ENCODE measurements at regions of chr14 and their contacts with region 1.

Region 1: DNA sequence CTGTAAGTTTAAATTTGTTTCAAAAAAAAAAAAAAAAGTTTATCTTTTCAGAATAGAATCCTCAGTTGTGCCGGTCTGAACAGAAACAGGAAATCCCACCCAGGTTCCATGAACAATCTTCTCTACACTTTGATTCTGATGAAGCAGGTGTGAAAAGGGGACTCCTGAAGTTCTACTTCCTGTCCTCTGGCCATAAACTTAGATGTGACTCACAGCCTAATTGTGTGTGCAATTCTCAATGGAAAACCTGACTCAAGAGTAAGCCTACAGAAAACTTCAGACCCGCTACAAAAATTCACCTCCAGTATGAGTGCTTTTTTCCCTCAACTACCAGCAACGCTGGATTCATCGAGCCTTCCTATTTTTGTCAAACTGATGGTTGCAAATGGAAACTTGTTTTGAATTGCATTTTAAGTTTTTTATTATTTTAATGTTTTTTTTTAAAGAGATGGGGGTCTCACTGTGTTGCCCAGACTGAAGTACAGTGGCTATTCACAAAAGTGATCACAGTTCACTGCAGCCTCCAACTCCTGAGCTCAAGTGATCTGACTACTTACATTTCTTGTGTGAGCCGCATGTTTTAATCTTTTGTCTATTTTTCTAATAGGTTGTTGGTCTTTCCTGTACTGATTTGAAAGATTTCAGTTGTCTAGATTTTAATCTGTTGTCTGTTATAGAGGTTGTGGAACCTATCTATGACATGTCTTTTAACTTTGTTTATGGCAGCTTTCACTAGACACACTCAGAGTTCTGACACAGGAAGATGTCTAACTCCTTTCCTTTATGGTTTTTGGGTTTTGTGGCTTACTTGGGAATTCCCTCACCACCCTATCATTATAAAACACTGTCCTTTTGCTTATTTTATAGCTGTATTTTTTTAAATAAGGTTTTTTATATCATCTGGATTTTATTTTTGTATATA is 37.6 kb downstream of the ATG14 start:
- DNase-seq: peak; percentile 68 to 85 (median 70)
- H3K4me3 ChIP-seq: peak overlapping the region in 1 of 2 donors; percentile 18
- H3K4me3 Mint-ChIP-seq: peak overlapping the region; percentile 52 to 87 (median 58)
- H3K27ac ChIP-seq: peak overlapping the region; percentile 33
- H3K27ac Mint-ChIP-seq: peak overlapping the region; percentile 81 to 98 (median 89)
- H3K4me1 ChIP-seq: peaks cover 33% of the 10 kb centered on the region
- H3K4me1 Mint-ChIP-seq: peaks cover 32 to 49% (median 38%) of the 10 kb centered on the region in 4 donors
- H3K27me3 ChIP-seq: no peaks in the 10 kb centered on the region
- H3K27me3 Mint-ChIP-seq: no peaks in the 10 kb centered on the region

Region 2: DNA sequence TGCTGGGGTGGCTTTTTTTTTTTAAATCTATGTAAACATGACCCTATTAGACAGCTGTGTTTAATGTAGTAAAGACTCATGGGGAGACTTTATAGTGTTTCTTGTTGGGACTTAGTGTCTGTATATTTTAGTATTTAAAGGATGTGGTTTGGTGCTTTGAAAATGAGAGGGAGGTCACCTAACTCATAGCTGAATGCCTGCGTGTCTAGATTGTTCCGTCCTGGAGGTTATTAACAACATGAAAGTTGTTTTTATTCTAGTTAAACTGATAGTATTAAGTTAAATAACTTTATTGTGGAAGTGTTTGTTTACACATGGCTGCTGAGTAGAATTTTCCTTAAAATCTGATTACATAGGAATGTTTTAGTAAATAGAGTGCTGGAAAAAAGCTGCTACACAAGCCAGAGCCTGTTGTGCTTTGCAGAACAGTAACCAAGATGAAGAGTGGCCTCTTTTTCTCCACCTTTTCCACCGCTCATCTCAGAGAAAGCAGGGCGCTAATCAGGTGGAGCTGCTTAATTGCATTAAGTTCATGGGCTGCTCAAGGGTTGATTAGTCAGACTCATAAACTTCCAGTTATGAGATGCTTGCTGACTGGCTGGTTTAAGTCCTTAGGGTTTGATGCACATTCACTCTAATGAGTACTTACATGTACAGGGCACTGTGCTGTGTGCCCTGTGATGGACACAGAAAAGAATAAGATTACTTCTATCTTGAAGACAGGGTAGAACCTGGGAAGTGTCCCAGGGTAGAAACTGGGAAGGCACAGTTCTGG is 40.1 kb before region 1 on chr14:
- CTCF ChIA-PET with region 1: interaction called, 5 read pairs
- POLR2A ChIA-PET with region 1: interaction called, 12 read pairs
- intact Hi-C with region 1: loop called (anchors 5 kb)
- DNase-seq: peak in 4 of 5 donors; percentile 37 to 56 (median 40)
- H3K4me3 ChIP-seq: peak overlapping the region; percentile 11 to 37
- H3K4me3 Mint-ChIP-seq: peak overlapping the region; percentile 81 to 93 (median 89)
- H3K27ac ChIP-seq: peak overlapping the region; percentile 67
- H3K27ac Mint-ChIP-seq: peak overlapping the region; percentile 86 to 97 (median 94)
- H3K4me1 ChIP-seq: peaks cover 84% of the 10 kb centered on the region
- H3K4me1 Mint-ChIP-seq: peaks cover 60 to 90% (median 74%) of the 10 kb centered on the region in 4 donors
- H3K27me3 ChIP-seq: no peaks in the 10 kb centered on the region
- H3K27me3 Mint-ChIP-seq: no peaks in the 10 kb centered on the region

Region 3: DNA sequence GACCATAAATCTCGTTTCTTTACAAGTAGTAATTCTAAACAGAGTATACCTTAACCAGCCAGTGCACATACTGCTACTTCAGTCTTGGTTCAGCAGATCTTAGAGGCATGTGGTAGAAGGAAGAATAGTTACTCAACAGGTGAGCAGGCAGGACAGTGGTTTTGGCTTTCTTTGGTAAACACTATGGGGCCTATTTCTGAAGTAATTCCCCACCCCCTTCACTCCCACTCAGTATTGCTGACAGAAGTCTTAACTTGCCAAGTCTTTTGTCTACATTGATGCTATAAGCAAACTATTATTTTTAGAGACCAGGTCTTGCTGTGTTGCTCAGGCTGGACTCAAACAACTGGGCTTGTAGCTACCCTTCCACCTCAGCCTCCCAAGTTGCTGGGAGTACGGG is 34.3 kb before region 1 on chr14:
- CTCF ChIA-PET with region 1: no interaction called
- POLR2A ChIA-PET with region 1: interaction called, 12 read pairs
- intact Hi-C with region 1: loop called (anchors 5 kb)
- DNase-seq: peak in 1 of 5 donors; percentile 14
- H3K4me3 ChIP-seq: no peak overlapping the region
- H3K4me3 Mint-ChIP-seq: peak overlapping the region in 7 of 8 donors; percentile 21 to 60 (median 31)
- H3K27ac ChIP-seq: no peak overlapping the region
- H3K27ac Mint-ChIP-seq: peak overlapping the region; percentile 38 to 96 (median 83)
- H3K4me1 ChIP-seq: peaks cover 71% of the 10 kb centered on the region
- H3K4me1 Mint-ChIP-seq: peaks cover 55 to 92% (median 70%) of the 10 kb centered on the region in 4 donors
- H3K27me3 ChIP-seq: no peaks in the 10 kb centered on the region
- H3K27me3 Mint-ChIP-seq: no peaks in the 10 kb centered on the region

Region 4: DNA sequence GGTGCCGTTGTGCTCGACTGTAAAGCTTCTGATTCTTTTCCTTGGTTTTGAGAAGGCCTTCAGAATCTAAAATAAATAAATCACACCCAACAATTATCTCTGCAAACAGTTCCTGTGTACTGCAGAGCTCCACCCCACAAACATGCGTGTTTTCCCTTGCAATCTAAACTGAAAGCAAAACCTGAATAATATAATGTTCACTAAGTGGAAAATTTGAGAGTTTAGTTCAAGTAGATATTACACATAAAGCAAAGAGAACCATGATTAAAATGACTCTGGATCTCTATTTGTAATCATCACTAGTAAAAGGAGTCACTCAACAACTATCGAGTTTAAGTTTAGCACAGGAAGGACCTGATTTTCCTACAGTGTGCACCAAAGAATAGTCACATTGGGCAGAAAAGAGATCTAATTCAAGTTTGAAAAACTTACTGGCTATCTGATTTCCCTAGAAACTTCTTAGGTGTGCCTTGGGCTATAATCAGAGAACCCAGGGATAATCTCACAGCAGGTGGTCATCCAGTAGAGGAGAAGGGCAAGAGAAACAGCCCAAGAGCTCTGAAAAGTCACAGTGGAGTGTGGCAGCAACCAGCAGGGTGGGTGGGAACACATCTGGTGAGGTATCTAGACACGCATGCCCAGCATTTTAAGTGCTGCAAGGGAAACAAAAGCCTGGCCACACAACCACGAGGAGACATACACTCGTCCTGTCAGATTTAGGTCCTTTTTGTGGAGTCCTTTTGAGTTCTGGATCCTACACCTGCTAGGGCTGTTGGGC is 12.2 kb after region 1 on chr14:
- CTCF ChIA-PET with region 1: interaction called, 3 read pairs
- POLR2A ChIA-PET with region 1: interaction called, 14 read pairs
- intact Hi-C with region 1: no loop called
- DNase-seq: peak in 4 of 5 donors; percentile 13 to 39 (median 16)
- H3K4me3 ChIP-seq: peak overlapping the region in 1 of 2 donors; percentile 23
- H3K4me3 Mint-ChIP-seq: peak overlapping the region; percentile 56 to 86 (median 84)
- H3K27ac ChIP-seq: peak overlapping the region; percentile 59
- H3K27ac Mint-ChIP-seq: peak overlapping the region; percentile 83 to 98 (median 93)
- H3K4me1 ChIP-seq: peaks cover 19% of the 10 kb centered on the region
- H3K4me1 Mint-ChIP-seq: peaks cover 24 to 39% (median 25%) of the 10 kb centered on the region in 4 donors
- H3K27me3 ChIP-seq: no peaks in the 10 kb centered on the region
- H3K27me3 Mint-ChIP-seq: no peaks in the 10 kb centered on the region

Region 5: GRCh38 chr14:55411426-55412389 is 37.7 kb after region 1 on chr14 and contains the start of gene ATG14:
- CTCF ChIA-PET with region 1: no interaction called
- POLR2A ChIA-PET with region 1: interaction called, 8 read pairs
- intact Hi-C with region 1: loop called (anchors 5 kb)
- DNase-seq: peak; percentile 65 to 76 (median 73)
- H3K4me3 ChIP-seq: peak within 1 kb of the TSS; percentile 90 to 93
- H3K4me3 Mint-ChIP-seq: peak within 1 kb of the TSS; percentile 88 to 94 (median 92)
- H3K27ac ChIP-seq: peak within 1 kb of the TSS; percentile 78
- H3K27ac Mint-ChIP-seq: peak within 1 kb of the TSS; percentile 45 to 96 (median 91)
- H3K4me1 ChIP-seq: peaks cover 24% of the 10 kb centered on the region
- H3K4me1 Mint-ChIP-seq: peaks cover 27 to 49% (median 38%) of the 10 kb centered on the region in 4 donors
- H3K27me3 ChIP-seq: no peaks in the 10 kb centered on the region
- H3K27me3 Mint-ChIP-seq: peaks cover 0 to 2% of the 10 kb centered on the region in 2 donors
- total RNA-seq, gene ATG14: 18.3 to 18.4 TPM

Region 6: GRCh38 chr14:55689981-55690863 is 316.2 kb after region 1 on chr14:
- CTCF ChIA-PET with region 1: no interaction called
- POLR2A ChIA-PET with region 1: no interaction called
- intact Hi-C with region 1: no loop called
- DNase-seq: no peak
- H3K4me3 ChIP-seq: no peak overlapping the region
- H3K4me3 Mint-ChIP-seq: no peak overlapping the region
- H3K27ac ChIP-seq: no peak overlapping the region
- H3K27ac Mint-ChIP-seq: peak overlapping the region in 2 of 7 donors; percentile 47 to 62
- H3K4me1 ChIP-seq: no peaks in the 10 kb centered on the region
- H3K4me1 Mint-ChIP-seq: no peaks in the 10 kb centered on the region
- H3K27me3 ChIP-seq: no peaks in the 10 kb centered on the region
- H3K27me3 Mint-ChIP-seq: no peaks in the 10 kb centered on the region

Measured in CD4-positive, alpha-beta memory T cell (primary cell).